WTC11 (cell line): ENCODE measurements at regions of chr11 and their contacts with region 1.

Region 1: GRCh38 chr11:13354335-13354734 is 76.7 kb downstream of the BMAL1 start:
- DNase-seq: peak; percentile 40
- ATAC-seq: peak; percentile 78
- H3K4me3 Mint-ChIP-seq: no peak overlapping the region
- H3K27ac Mint-ChIP-seq: no peak overlapping the region
- H3K4me1 Mint-ChIP-seq: 0 out of 2 replicates have a peak, but pooled peaks cover 3% of the 10 kb centered on the region
- H3K27me3 Mint-ChIP-seq: no peaks in the 10 kb centered on the region
- CTCF ChIP-seq: peak; percentile 27

Region 2: GRCh38 chr11:13276832-13277767 is 77.2 kb before region 1 on chr11:
- CTCF ChIA-PET with region 1: no interaction called
- POLR2A ChIA-PET with region 1: no interaction called
- DNase-seq: peak; percentile 98
- ATAC-seq: peak; percentile 91
- H3K4me3 Mint-ChIP-seq: peak overlapping the region; percentile 93
- H3K27ac Mint-ChIP-seq: peak overlapping the region; percentile 24; the same call in 1 of the 2 replicates
- H3K4me1 Mint-ChIP-seq: peaks cover 30% of the 10 kb centered on the region
- H3K27me3 Mint-ChIP-seq: peaks cover 83% of the 10 kb centered on the region
- CTCF ChIP-seq: no peak

Region 3: GRCh38 chr11:13335319-13335718 is 19.0 kb before region 1 on chr11:
- CTCF ChIA-PET with region 1: interaction called, 20 read pairs
- POLR2A ChIA-PET with region 1: no interaction called
- DNase-seq: peak; percentile 83
- ATAC-seq: peak; percentile 94
- H3K4me3 Mint-ChIP-seq: no peak overlapping the region
- H3K27ac Mint-ChIP-seq: no peak overlapping the region
- H3K4me1 Mint-ChIP-seq: no peaks in the 10 kb centered on the region
- H3K27me3 Mint-ChIP-seq: no peaks in the 10 kb centered on the region
- CTCF ChIP-seq: peak; percentile 79

Region 4: GRCh38 chr11:13343931-13344717 is 10.2 kb before region 1 on chr11:
- CTCF ChIA-PET with region 1: interaction called, 30 read pairs
- POLR2A ChIA-PET with region 1: no interaction called
- DNase-seq: peak; percentile 75
- ATAC-seq: peak; percentile 57
- H3K4me3 Mint-ChIP-seq: no peak overlapping the region
- H3K27ac Mint-ChIP-seq: no peak overlapping the region
- H3K4me1 Mint-ChIP-seq: peaks cover 10% of the 10 kb centered on the region
- H3K27me3 Mint-ChIP-seq: no peaks in the 10 kb centered on the region
- CTCF ChIP-seq: peak; percentile 82

Region 5: DNA sequence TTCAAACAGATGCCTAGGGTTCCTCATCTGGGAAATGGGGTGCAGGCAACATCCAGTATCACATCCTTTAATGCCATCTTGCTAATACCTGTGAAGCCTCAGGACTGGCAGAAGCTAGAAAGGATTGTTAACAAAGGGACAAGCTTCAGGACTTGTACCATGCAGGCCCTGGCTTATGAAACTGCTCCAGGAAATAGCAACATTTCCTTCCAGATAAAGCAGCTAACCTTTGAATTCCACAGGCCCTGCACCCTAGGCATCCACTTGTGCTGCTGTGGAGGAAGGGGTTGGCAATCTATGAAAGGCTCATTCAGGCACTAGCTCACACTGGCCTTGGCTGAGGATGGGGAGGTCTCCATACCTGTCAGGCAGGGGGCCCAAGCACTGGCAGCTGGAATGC is 21.5 kb after region 1 on chr11:
- CTCF ChIA-PET with region 1: interaction called, 10 read pairs
- POLR2A ChIA-PET with region 1: no interaction called
- DNase-seq: no peak
- ATAC-seq: no peak
- H3K4me3 Mint-ChIP-seq: no peak overlapping the region
- H3K27ac Mint-ChIP-seq: no peak overlapping the region
- H3K4me1 Mint-ChIP-seq: peaks cover 6% of the 10 kb centered on the region
- H3K27me3 Mint-ChIP-seq: no peaks in the 10 kb centered on the region
- CTCF ChIP-seq: no peak

Region 6: DNA sequence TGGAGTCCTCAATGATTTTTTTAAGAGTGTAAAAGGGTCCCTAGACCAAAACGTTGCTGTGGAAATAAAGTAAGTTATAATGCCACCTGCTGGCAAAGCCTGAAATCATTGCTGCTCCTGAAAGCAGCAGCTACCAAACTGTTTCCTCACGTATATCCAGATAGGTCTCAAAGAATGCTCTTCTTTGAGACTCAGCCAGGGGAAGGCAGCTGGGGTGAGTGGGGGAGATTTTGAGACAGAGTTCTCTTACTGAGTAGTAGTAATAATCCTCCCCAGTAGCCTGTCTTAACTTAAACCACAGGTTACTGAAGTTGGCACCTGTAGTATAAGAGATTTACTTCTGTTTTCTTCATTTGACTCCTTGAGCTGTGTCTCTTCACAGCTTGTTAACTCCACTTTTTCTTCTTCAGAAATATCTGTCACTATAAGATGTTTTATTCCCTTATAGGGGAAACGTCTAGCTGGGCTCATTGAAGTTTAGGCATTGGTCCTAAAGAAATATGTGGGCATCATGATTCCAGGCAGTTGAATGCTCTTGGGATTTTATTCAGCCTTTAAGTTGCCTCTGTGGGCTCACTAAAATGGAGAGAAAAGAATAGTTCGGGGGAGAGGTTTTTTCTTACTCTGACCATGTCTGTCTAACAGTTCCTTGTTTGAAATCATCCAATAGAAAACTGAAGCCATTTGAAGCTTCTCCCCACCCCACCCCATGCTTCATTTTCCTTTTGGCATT is 30.7 kb after region 1 on chr11:
- CTCF ChIA-PET with region 1: interaction called, 27 read pairs
- POLR2A ChIA-PET with region 1: no interaction called
- DNase-seq: peak; percentile 38
- ATAC-seq: peak; percentile 82
- H3K4me3 Mint-ChIP-seq: no peak overlapping the region
- H3K27ac Mint-ChIP-seq: no peak overlapping the region
- H3K4me1 Mint-ChIP-seq: no peaks in the 10 kb centered on the region
- H3K27me3 Mint-ChIP-seq: no peaks in the 10 kb centered on the region
- CTCF ChIP-seq: no peak